ENCODE measurements at regions of chr20 and their contacts with region 1.

Region 1: GRCh38 chr20:34312544-34313217 is 9.5 kb upstream of the AHCY start:
- DNase-seq: peak; percentile 77
- H3K4me3 ChIP-seq: peak overlapping the region in 1 of 3 experiments; percentile 16
- H3K27ac ChIP-seq: no peak overlapping the region
- H3K4me1 ChIP-seq: peaks cover 38% of the 10 kb centered on the region
- H3K27me3 ChIP-seq: no peaks in the 10 kb centered on the region
- CTCF ChIP-seq: peak; percentile 100

Region 2: GRCh38 chr20:33915726-33916331 is 396.9 kb before region 1 on chr20:
- CTCF ChIA-PET with region 1: no interaction called
- dilution Hi-C with region 1: no loop called
- in situ Hi-C with region 1: no loop called
- intact Hi-C with region 1: no loop called
- DNase-seq: peak; percentile 15
- H3K4me3 ChIP-seq: no peak overlapping the region
- H3K27ac ChIP-seq: no peak overlapping the region
- H3K4me1 ChIP-seq: peaks cover 3% of the 10 kb centered on the region
- H3K27me3 ChIP-seq: no peaks in the 10 kb centered on the region
- CTCF ChIP-seq: peak; percentile 74 to 77

Region 3: GRCh38 chr20:34334654-34335407 is 22.1 kb after region 1 on chr20:
- CTCF ChIA-PET with region 1: interaction called, 3 read pairs
- dilution Hi-C with region 1: no loop called
- in situ Hi-C with region 1: no loop called
- intact Hi-C with region 1: loop called (anchors 1 kb)
- DNase-seq: peak; percentile 66
- H3K4me3 ChIP-seq: no peak overlapping the region
- H3K27ac ChIP-seq: peak overlapping the region; percentile 93
- H3K4me1 ChIP-seq: peaks cover 27% of the 10 kb centered on the region
- H3K27me3 ChIP-seq: no peaks in the 10 kb centered on the region
- CTCF ChIP-seq: no peak

Region 4: DNA sequence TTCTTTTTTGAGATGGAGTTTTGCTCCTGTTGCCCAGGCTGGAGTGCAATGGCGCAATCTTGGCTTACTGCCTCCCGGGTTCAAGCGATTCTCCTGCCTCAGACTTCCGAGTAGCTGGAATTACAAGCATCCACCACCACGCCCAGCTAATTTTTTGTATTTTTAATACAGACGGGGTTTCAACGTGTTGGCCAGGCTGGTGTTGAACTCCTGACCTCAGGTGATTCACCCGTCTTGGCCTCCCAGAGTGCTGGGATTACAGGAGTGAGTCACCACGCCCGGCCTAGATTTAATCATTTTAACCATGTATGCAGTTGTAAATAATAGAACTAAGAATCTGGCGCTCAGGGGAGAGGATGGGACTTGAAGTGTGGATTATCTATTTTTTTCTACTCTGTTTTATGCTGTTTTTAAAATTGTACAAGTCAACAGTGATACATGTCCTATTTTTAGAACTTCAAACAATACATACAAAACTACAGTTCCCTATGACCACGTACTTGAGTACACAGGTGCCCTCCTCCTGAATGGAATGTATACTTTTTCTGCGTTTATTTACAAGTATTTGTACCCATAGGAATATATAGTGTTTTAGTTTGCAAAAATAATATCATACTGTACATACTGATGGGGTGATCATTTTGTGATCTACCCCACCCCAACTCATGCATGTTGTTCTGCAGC is 78.2 kb after region 1 on chr20:
- CTCF ChIA-PET with region 1: interaction called, 5 read pairs
- dilution Hi-C with region 1: no loop called
- in situ Hi-C with region 1: loop called in 1 of 2 experiments (anchors 5 kb)
- intact Hi-C with region 1: loop called (anchors 1 kb)
- DNase-seq: peak; percentile 95
- H3K4me3 ChIP-seq: no peak overlapping the region
- H3K27ac ChIP-seq: peak overlapping the region; percentile 55
- H3K4me1 ChIP-seq: peaks cover 35% of the 10 kb centered on the region
- H3K27me3 ChIP-seq: no peaks in the 10 kb centered on the region
- CTCF ChIP-seq: no peak

Region 5: DNA sequence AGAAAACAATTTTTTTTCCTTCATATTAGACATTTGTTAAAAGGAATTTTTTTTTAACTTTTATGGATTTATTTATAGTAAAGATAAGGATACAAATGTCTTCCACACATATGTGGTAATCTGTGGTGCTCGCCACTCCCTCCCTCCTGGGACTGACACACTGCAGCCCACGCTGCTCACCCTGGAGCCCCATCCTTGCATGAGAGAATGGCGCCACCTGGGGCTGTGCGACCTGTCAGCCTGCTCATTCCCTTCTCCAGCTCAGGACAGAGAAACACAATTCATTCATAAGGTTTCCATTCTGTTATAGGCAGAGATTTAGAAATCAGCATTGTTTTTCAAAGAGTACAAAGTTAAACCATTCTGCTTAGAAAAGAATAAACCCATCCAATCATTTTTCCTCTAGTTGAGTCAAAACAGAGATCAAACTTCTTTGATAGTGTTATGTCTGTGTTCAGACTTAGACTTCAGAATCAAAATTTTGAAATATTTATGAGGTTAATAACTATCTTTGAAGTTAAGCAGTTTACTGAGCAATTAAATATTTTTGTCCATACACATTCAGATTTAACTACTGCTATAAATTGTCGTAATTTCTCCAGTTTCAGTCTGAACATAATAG is 160.7 kb after region 1 on chr20:
- CTCF ChIA-PET with region 1: no interaction called
- dilution Hi-C with region 1: no loop called
- in situ Hi-C with region 1: no loop called
- intact Hi-C with region 1: loop called (anchors 1 kb)
- DNase-seq: peak; percentile 16
- H3K4me3 ChIP-seq: no peak overlapping the region
- H3K27ac ChIP-seq: no peak overlapping the region
- H3K4me1 ChIP-seq: peaks cover 18% of the 10 kb centered on the region
- H3K27me3 ChIP-seq: no peaks in the 10 kb centered on the region
- CTCF ChIP-seq: peak; percentile 2 to 44

Region 6: DNA sequence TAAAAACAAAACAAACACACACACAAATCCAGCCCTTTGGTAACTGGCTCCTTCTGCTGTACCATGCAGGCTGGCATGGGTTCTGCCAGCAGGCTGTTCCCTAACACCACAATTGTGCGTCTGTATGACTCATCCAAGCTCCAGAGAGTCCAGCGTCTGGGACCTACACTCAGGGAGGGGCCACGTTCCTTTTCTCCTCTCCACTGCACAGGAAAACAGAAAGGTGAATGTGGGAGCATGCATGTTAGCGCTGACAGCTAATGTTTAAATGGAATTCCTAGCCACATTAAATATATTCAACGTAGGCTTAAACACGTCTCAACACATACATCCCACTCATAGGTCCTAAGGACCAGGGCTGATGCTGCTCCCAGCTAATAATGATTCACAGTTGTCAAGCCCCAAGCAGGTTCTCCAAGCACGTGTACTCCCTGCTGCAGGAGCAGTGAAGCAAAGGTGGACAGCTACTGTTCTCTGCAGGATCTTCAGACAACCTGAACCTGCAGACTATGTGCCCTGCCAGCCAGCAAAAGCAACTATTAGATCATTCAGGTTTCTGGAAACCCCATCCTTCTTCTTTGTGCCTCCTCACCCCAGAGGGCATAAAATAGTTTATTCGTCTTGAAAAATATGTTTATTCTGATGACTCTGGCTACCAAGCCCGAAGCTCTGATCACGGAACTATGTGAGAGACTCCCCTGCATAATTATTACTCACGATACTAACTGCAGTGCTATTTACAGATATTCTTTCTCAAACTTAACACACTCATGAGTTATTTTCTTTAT is 266.7 kb after region 1 on chr20:
- CTCF ChIA-PET with region 1: no interaction called
- dilution Hi-C with region 1: no loop called
- in situ Hi-C with region 1: no loop called
- intact Hi-C with region 1: loop called (anchors 1 kb)
- DNase-seq: peak; percentile 94
- H3K4me3 ChIP-seq: no peak overlapping the region
- H3K27ac ChIP-seq: peak overlapping the region; percentile 10
- H3K4me1 ChIP-seq: peaks cover 30% of the 10 kb centered on the region
- H3K27me3 ChIP-seq: no peaks in the 10 kb centered on the region
- CTCF ChIP-seq: peak; percentile 92

Region 7: GRCh38 chr20:34768096-34768495 is 455.4 kb after region 1 on chr20:
- CTCF ChIA-PET with region 1: interaction called, 7 read pairs
- dilution Hi-C with region 1: no loop called
- in situ Hi-C with region 1: no loop called
- intact Hi-C with region 1: loop called (anchors 5 kb)
- DNase-seq: no peak
- H3K4me3 ChIP-seq: no peak overlapping the region
- H3K27ac ChIP-seq: no peak overlapping the region
- H3K4me1 ChIP-seq: no peaks in the 10 kb centered on the region
- H3K27me3 ChIP-seq: no peaks in the 10 kb centered on the region
- CTCF ChIP-seq: no peak